Right cardiac atrium (tissue), 5 donors: ENCODE measurements at regions of chr5 and their contacts with region 1.

Region 1: DNA sequence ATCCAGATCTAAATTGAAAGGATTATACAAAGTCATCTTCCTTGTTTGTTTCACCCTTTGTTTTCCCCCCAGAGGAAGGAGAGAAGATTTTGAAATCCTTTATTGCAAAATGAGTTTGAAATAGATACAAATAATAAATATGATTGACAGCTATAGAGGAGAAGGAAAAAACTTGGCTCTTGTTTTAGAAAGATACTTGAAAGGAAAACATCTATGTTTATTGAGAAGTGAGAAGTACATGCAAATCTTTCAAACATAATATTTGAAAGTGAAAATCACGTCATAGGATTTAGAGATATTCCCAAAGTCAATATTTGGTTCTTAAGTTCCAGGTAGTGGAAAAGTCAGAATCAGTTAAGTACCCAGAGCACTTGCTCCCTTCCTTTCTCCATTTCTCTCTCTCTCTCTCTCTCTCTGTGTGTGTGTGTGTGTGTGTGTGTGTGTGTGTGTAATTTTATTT is 27.2 kb downstream of the PAM start:
- DNase-seq: no peak
- ATAC-seq: no peak
- H3K4me3 ChIP-seq: no peak overlapping the region
- H3K27ac ChIP-seq: no peak overlapping the region
- H3K4me1 ChIP-seq: peaks cover 5% of the 10 kb centered on the region
- H3K27me3 ChIP-seq: no peaks in the 10 kb centered on the region

Region 2: DNA sequence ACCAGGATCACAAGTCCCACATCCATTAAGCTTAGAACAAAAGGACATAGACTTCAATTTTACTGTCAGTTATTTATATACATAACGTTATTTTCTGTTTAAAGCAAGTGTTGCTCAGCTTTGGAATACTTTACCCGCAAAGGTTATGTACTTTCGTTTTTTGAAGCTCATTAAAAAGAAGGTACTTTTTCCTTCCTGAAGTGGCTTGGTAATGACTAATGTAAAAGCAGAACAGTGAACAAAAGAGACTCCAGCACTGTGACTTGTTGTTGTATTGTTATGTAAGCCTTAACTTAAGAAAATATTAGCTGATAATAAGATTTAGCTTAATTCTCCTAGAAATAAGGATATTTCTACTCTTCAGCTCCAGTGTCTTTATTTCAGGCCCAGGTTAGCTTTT is 186.2 kb before region 1 on chr5:
- intact Hi-C with region 1: no loop called
- DNase-seq: no peak
- ATAC-seq: no peak
- H3K4me3 ChIP-seq: no peak overlapping the region
- H3K27ac ChIP-seq: no peak overlapping the region
- H3K4me1 ChIP-seq: no peaks in the 10 kb centered on the region
- H3K27me3 ChIP-seq: no peaks in the 10 kb centered on the region

Region 3: GRCh38 chr5:103139264-103139865 is 357.0 kb after region 1 on chr5:
- intact Hi-C with region 1: loop called in 1 of 4 experiments (anchors 10 kb)
- DNase-seq: peak; percentile 65 to 80 (median 65)
- ATAC-seq: peak; percentile 79 to 86
- H3K4me3 ChIP-seq: no peak overlapping the region
- H3K27ac ChIP-seq: no peak overlapping the region
- H3K4me1 ChIP-seq: no peaks in the 10 kb centered on the region
- H3K27me3 ChIP-seq: no peaks in the 10 kb centered on the region